OCI-LY7 (cell line): ENCODE measurements at regions of chr2 and their contacts with region 1.

Region 1: GRCh38 chr2:222641336-222641735 is 14.6 kb downstream of the FARSB start:
- DNase-seq: no peak
- H3K4me3 ChIP-seq: no peak overlapping the region
- H3K27ac ChIP-seq: no peak overlapping the region
- H3K4me1 ChIP-seq: no peaks in the 10 kb centered on the region
- CTCF ChIP-seq: no peak

Region 2: DNA sequence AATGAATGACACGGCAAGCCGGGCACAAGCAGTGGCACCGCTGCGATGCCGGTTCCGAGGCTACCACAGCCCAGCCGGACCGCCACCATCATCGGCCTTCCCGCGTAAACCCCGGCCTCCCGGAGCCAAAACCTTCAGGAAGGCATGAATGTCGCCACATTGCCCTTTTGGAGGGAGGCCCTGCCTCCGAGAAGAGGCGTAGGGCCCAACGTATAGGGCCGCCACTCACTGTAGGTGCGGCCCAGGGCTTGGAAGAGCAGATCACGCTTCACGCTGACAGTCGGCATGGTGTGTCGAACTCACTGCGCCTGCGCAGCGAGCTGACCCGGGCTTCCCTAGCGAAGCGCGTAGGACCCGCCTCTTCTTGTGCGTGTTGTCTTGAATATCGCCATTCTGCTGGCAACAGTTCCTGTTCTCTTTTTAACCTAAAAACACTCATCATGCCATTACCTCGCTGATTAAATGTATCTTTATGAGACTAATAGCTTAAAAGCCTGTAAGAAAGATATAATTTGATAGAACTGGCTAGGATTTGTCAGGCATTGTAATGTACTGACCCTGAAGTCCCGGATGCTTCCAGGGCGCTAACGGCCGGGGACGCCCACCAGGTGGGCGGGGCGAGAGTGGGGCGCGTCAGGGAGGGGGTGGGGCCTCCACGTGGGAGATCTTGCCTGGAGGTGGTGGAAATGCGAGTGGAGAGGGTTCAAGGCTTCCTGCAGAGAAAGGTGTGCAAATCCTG is 14.6 kb after region 1 on chr2 and contains the start of gene FARSB:
- CTCF ChIA-PET with region 1: no interaction called
- POLR2A ChIA-PET with region 1: interaction called, 18 read pairs
- intact Hi-C with region 1: no loop called
- DNase-seq: peak; percentile 99
- H3K4me3 ChIP-seq: peak within 1 kb of the TSS; percentile 89
- H3K27ac ChIP-seq: peak within 1 kb of the TSS; percentile 83
- H3K4me1 ChIP-seq: peaks cover 36% of the 10 kb centered on the region
- CTCF ChIP-seq: no peak
- total RNA-seq, gene FARSB: 23.4 and 24.9 TPM in 2 replicates

Region 3: DNA sequence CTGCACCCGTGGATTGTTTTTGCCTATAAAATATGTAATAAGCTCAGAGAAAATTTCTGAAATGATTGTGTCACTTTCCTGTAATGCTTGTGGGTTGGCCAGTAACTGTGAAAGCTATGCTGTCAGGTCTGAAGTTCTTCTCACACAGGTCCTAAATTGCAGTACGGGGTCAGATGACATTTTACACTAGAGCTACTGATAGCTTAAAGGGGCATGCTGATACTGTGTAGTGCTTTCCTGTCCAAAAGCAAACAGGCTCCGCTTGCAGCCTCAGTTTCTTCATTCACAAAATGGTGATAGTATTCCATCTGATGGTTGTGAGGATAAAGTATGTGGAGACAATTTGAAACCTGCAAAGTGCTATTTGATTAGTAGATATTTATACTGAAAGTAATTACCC is 22.1 kb after region 1 on chr2:
- CTCF ChIA-PET with region 1: no interaction called
- POLR2A ChIA-PET with region 1: interaction called, 11 read pairs
- intact Hi-C with region 1: no loop called
- DNase-seq: no peak
- H3K4me3 ChIP-seq: no peak overlapping the region
- H3K27ac ChIP-seq: no peak overlapping the region
- H3K4me1 ChIP-seq: no peaks in the 10 kb centered on the region
- CTCF ChIP-seq: no peak